ENCODE measurements at regions of chr3 and their contacts with region 1.

Region 1: DNA sequence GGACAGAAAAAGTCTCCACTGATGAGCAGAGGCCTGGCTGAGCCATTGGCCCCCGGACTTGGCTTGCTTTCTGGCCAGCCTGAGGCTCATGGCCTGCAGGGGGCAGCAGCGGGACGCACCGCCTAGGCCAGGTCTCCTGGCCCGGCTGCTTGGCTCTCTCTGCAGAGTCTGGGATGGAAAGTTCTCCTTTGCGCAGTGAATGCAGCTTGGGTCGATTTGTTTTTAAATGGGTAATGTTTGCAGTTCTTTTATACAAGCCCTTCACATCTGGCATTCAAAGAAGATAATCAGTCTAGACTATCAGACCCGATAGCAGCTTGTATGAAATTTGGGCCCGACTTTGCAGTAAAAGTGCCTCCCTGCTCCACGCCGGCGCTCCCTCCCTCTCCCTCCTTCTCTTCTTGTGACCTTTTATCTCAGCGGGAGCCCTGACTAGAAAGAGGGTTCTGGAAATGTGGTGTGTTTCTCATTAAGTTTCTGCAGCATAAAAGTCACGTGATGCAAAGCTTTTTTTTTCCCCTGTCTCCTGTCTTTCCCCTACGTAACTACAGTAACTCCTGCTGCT is 59.9 kb downstream of the ZNF621 start:
- DNase-seq: peak; percentile 85
- ATAC-seq: peak; percentile 89
- H3K4me3 ChIP-seq: no peak overlapping the region
- H3K4me3 Mint-ChIP-seq: no peak overlapping the region
- H3K27ac ChIP-seq: no peak overlapping the region
- H3K27ac Mint-ChIP-seq: no peak overlapping the region
- H3K4me1 ChIP-seq: peaks cover 0 to 3% of the 10 kb centered on the region in 2 donors
- H3K4me1 Mint-ChIP-seq: peaks cover 14% of the 10 kb centered on the region
- H3K27me3 ChIP-seq: no peaks in the 10 kb centered on the region
- H3K27me3 Mint-ChIP-seq: peaks cover 7% of the 10 kb centered on the region
- CTCF ChIP-seq: peak; percentile 94

Region 2: GRCh38 chr3:40329071-40329470 is 255.6 kb before region 1 on chr3:
- CTCF ChIA-PET with region 1: interaction called, 27 read pairs
- POLR2A ChIA-PET with region 1: no interaction called
- intact Hi-C with region 1: no loop called
- DNase-seq: no peak
- ATAC-seq: no peak
- H3K4me3 ChIP-seq: no peak overlapping the region
- H3K4me3 Mint-ChIP-seq: no peak overlapping the region
- H3K27ac ChIP-seq: no peak overlapping the region
- H3K27ac Mint-ChIP-seq: no peak overlapping the region
- H3K4me1 ChIP-seq: peaks cover 0 to 5% of the 10 kb centered on the region in 2 donors
- H3K4me1 Mint-ChIP-seq: peaks cover 3% of the 10 kb centered on the region
- H3K27me3 ChIP-seq: no peaks in the 10 kb centered on the region
- H3K27me3 Mint-ChIP-seq: peaks cover 7% of the 10 kb centered on the region
- CTCF ChIP-seq: no peak

Region 3: DNA sequence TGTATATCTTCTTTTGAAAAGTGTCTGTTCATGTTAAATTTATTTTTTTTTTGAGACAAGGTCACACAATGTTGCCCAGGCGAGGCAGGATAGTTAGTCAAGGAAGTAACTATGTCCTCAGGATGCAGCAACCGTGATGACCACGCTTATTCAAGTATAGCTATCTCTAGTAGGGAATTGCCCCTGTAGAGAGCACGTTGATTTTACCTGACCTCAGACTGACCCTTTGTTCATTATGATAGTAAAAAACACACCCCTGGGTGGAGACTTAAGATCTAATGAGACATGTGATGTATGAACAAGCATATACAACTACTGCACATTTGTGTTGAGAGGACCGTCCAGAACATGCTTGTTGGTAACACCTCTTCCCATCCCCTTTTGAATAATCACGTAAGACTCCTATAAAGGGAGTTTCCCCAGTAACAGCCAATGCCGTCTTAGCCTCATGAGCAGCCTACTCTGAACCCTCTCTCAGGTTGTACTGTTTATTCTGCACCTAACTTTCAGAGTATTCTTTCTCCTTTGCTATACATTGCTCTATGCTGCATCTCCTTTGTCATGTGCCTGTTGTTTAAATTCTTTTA is 27.0 kb before region 1 on chr3:
- CTCF ChIA-PET with region 1: no interaction called
- POLR2A ChIA-PET with region 1: no interaction called
- intact Hi-C with region 1: no loop called
- DNase-seq: no peak
- ATAC-seq: no peak
- H3K4me3 ChIP-seq: no peak overlapping the region
- H3K4me3 Mint-ChIP-seq: no peak overlapping the region
- H3K27ac ChIP-seq: no peak overlapping the region
- H3K27ac Mint-ChIP-seq: no peak overlapping the region
- H3K4me1 ChIP-seq: no peaks in the 10 kb centered on the region
- H3K4me1 Mint-ChIP-seq: no peaks in the 10 kb centered on the region
- H3K27me3 ChIP-seq: no peaks in the 10 kb centered on the region
- H3K27me3 Mint-ChIP-seq: peaks cover 2% of the 10 kb centered on the region
- CTCF ChIP-seq: no peak

Region 4: DNA sequence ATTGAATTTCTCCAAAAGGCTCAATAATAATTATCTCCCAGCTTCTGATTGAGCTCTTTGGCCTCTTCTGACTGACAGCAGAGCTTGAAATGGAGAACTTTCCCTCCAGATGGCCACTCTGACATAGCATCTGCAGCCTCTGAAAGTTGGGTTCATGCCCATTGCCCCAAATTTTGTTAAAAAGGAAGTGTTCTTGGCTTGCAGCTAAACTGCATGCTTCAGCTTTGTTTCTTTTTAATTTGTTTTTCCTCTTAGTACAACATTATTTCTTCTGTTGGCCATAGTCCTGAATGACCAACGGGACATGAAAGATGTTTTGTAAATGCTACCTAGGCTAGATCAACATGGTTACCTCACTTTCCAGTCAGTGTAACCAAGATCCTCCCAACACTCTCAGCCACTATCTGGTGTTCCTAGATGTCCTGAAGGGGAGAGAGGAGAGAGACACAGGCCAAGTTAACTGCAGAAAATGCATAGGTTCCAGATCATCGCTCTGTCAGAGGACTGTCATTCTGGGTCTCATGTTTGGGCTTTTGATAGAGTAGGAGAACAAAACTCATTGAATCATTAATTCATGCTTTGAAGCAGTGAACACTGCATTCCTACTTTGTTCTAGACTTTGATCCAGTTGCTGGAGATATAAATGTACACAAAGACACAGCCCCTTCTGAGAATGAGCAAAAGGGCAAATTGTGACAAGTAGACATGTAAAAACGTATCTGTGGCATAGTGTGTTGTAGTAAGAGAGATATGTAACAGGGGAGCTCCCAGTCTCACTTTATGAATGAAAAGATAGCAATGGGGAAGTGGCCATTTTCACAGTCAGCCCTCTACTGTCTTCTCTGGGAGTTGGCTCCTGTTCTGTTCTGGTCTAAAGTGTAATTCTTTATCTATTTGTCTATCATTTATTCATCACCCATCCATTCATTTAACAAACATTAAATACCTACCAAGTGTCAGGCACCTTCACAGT is 96.3 kb after region 1 on chr3:
- CTCF ChIA-PET with region 1: interaction called, 7 read pairs
- POLR2A ChIA-PET with region 1: no interaction called
- intact Hi-C with region 1: loop called (anchors 1 kb)
- DNase-seq: peak; percentile 48
- ATAC-seq: peak; percentile 58
- H3K4me3 ChIP-seq: no peak overlapping the region
- H3K4me3 Mint-ChIP-seq: no peak overlapping the region
- H3K27ac ChIP-seq: no peak overlapping the region
- H3K27ac Mint-ChIP-seq: no peak overlapping the region
- H3K4me1 ChIP-seq: peaks cover 5% of the 10 kb centered on the region in 2 donors
- H3K4me1 Mint-ChIP-seq: peaks cover 21% of the 10 kb centered on the region
- H3K27me3 ChIP-seq: no peaks in the 10 kb centered on the region
- H3K27me3 Mint-ChIP-seq: no peaks in the 10 kb centered on the region
- CTCF ChIP-seq: no peak

Region 5: DNA sequence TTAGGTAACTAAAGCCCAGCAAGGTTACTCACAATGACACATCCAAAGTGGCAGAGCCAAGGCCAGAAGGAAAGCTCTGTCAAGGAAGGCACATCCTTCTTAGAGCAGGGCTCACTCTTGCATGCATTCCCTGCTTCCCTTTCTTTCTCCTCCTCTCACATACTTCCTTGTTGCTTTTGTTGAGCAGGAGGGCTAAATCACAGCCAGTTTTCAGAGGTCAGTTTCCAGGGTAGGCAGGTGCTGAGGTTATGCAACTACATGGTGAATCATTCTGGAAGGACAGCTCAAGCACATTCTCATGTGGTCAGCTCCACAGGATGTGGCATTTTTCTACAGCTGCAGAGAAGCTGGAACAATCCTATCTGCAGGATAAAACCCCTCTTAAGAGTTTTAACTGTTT is 215.6 kb after region 1 on chr3:
- CTCF ChIA-PET with region 1: interaction called, 3 read pairs
- POLR2A ChIA-PET with region 1: no interaction called
- intact Hi-C with region 1: loop called (anchors 5 kb)
- DNase-seq: no peak
- ATAC-seq: no peak
- H3K4me3 ChIP-seq: no peak overlapping the region
- H3K4me3 Mint-ChIP-seq: no peak overlapping the region
- H3K27ac ChIP-seq: no peak overlapping the region
- H3K27ac Mint-ChIP-seq: no peak overlapping the region
- H3K4me1 ChIP-seq: no peaks in the 10 kb centered on the region
- H3K4me1 Mint-ChIP-seq: no peaks in the 10 kb centered on the region
- H3K27me3 ChIP-seq: peaks cover 0 to 3% (median 0%) of the 10 kb centered on the region in 4 experiments
- H3K27me3 Mint-ChIP-seq: peaks cover 13% of the 10 kb centered on the region
- CTCF ChIP-seq: no peak

Region 6: DNA sequence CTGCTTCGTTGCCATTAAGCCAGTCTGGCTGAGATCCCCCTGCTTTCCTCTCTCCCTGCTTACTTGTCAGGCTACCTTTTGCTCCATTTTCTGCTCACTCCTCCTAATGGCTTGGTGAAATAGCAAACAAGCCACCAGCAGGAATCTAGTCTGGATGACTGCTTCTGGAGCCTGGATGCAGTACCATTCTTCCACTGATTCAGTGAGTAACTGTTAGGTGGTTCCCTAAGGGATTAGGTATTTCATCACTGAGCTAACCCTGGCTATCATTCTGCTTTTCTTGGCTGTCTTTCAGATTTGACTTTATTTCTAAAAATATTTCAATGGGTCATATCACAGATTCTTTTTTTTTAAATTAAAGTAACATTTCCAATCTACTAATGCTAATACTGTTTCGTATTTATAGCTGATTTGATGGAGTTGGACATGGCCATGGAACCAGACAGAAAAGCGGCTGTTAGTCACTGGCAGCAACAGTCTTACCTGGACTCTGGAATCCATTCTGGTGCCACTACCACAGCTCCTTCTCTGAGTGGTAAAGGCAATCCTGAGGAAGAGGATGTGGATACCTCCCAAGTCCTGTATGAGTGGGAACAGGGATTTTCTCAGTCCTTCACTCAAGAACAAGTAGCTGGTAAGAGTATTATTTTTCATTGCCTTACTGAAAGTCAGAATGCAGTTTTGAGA is 639.6 kb after region 1 on chr3:
- CTCF ChIA-PET with region 1: interaction called, 7 read pairs
- POLR2A ChIA-PET with region 1: no interaction called
- intact Hi-C with region 1: loop called (anchors 5 kb)
- DNase-seq: no peak
- ATAC-seq: no peak
- H3K4me3 ChIP-seq: no peak overlapping the region
- H3K4me3 Mint-ChIP-seq: no peak overlapping the region
- H3K27ac ChIP-seq: no peak overlapping the region
- H3K27ac Mint-ChIP-seq: no peak overlapping the region
- H3K4me1 ChIP-seq: peaks cover 0 to 5% of the 10 kb centered on the region in 2 donors
- H3K4me1 Mint-ChIP-seq: peaks cover 46% of the 10 kb centered on the region
- H3K27me3 ChIP-seq: no peaks in the 10 kb centered on the region
- H3K27me3 Mint-ChIP-seq: no peaks in the 10 kb centered on the region
- CTCF ChIP-seq: no peak

Region 7: GRCh38 chr3:41716471-41716870 is 1131.8 kb after region 1 on chr3:
- CTCF ChIA-PET with region 1: interaction called, 7 read pairs
- POLR2A ChIA-PET with region 1: no interaction called
- intact Hi-C with region 1: loop called (anchors 10 kb)
- DNase-seq: no peak
- ATAC-seq: no peak
- H3K4me3 ChIP-seq: no peak overlapping the region
- H3K4me3 Mint-ChIP-seq: no peak overlapping the region
- H3K27ac ChIP-seq: no peak overlapping the region
- H3K27ac Mint-ChIP-seq: no peak overlapping the region
- H3K4me1 ChIP-seq: no peaks in the 10 kb centered on the region
- H3K4me1 Mint-ChIP-seq: no peaks in the 10 kb centered on the region
- H3K27me3 ChIP-seq: no peaks in the 10 kb centered on the region
- H3K27me3 Mint-ChIP-seq: no peaks in the 10 kb centered on the region
- CTCF ChIP-seq: no peak